ENCODE measurements at regions of chr2 and their contacts with region 1.

Region 1: DNA sequence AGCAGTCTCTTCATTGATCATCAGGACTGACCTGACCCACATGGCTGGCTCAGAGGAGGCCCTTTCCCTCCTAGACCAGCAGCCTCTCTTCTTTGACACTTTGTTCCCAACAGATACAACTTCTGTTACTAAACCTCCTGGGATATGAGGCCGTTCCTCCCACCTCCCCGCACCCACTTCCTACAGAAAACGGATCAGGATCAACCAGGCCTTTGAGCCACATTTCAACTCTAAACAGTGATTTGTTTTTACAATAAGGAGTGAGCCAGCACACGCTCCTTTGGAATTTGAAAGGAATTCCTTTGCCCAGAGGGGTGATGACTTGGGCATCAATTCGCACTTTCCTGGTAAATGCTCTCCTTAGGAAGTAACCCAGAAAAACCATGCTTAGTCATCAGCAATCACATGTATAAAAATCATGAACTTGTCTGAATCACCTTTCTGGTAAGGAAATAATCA is 180.4 kb downstream of the FAM124B start:
- DNase-seq: peak; percentile 93
- ATAC-seq: peak; percentile 87
- H3K4me3 ChIP-seq: no peak overlapping the region
- H3K27ac ChIP-seq: peak overlapping the region; percentile 64
- H3K4me1 ChIP-seq: peaks cover 9% of the 10 kb centered on the region
- H3K27me3 ChIP-seq: no peaks in the 10 kb centered on the region
- CTCF ChIP-seq: no peak
- POLR2A ChIP-seq: no peak
- RAD21 ChIP-seq: peak; percentile 12; the same call in 1 of the 2 replicates

Region 2: GRCh38 chr2:223930103-223930976 is 291.1 kb before region 1 on chr2:
- CTCF ChIA-PET with region 1: no interaction called
- POLR2A ChIA-PET with region 1: no interaction called
- dilution Hi-C with region 1: no loop called
- in situ Hi-C with region 1: no loop called
- intact Hi-C with region 1: no loop called
- DNase-seq: peak; percentile 76
- ATAC-seq: peak; percentile 67
- H3K4me3 ChIP-seq: no peak overlapping the region
- H3K27ac ChIP-seq: peak overlapping the region; percentile 36; the same call in 1 of the 2 replicates
- H3K4me1 ChIP-seq: peaks cover 14% of the 10 kb centered on the region
- H3K27me3 ChIP-seq: no peaks in the 10 kb centered on the region
- CTCF ChIP-seq: no peak
- POLR2A ChIP-seq: no peak
- RAD21 ChIP-seq: no peak

Region 3: GRCh38 chr2:224163566-224164307 is 57.7 kb before region 1 on chr2:
- CTCF ChIA-PET with region 1: no interaction called
- POLR2A ChIA-PET with region 1: no interaction called
- dilution Hi-C with region 1: no loop called
- in situ Hi-C with region 1: no loop called
- intact Hi-C with region 1: loop called (anchors 2 kb)
- DNase-seq: peak; percentile 64
- ATAC-seq: peak; percentile 45
- H3K4me3 ChIP-seq: no peak overlapping the region
- H3K27ac ChIP-seq: no peak overlapping the region
- H3K4me1 ChIP-seq: peaks cover 16% of the 10 kb centered on the region
- H3K27me3 ChIP-seq: no peaks in the 10 kb centered on the region
- CTCF ChIP-seq: no peak
- POLR2A ChIP-seq: no peak
- RAD21 ChIP-seq: no peak

Region 4: GRCh38 chr2:224195925-224196571 is 25.4 kb before region 1 on chr2:
- CTCF ChIA-PET with region 1: no interaction called
- POLR2A ChIA-PET with region 1: no interaction called
- dilution Hi-C with region 1: no loop called
- in situ Hi-C with region 1: no loop called
- intact Hi-C with region 1: no loop called
- DNase-seq: no peak
- ATAC-seq: no peak
- H3K4me3 ChIP-seq: no peak overlapping the region
- H3K27ac ChIP-seq: no peak overlapping the region
- H3K4me1 ChIP-seq: no peaks in the 10 kb centered on the region
- H3K27me3 ChIP-seq: peaks cover 2% of the 10 kb centered on the region
- CTCF ChIP-seq: no peak
- POLR2A ChIP-seq: no peak
- RAD21 ChIP-seq: no peak